AG04450 (cell line): ENCODE measurements at regions of chr11 and their contacts with region 1.

Region 1: GRCh38 chr11:124644426-124645280 is 22.0 kb downstream of the TBRG1 start:
- DNase-seq: no peak
- H3K4me3 ChIP-seq: no peak overlapping the region; the same call in 1 of the 2 replicates
- H3K27ac ChIP-seq: peak overlapping the region; percentile 40
- H3K27me3 ChIP-seq: no peaks in the 10 kb centered on the region
- CTCF ChIP-seq: peak; percentile 78

Region 2: DNA sequence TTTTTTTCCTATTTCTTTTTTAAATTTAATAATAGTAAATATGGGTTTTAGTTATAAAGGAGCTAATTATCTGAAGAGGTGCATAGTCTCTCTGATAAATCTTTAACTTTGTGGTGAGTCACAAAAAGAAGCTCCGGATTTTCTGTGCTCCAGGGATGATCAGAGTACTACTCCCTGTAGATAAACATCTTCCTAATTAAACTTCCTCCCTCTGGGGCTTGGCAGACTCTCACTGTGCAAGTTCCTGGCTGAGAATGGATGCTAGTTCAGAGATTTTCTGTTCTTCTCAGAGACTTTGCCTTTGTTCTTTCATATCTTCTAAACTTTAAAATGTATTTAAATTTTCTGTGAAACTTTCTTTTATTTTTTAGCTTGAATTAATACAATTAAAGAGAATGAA is 603.4 kb before region 1 on chr11 and contains the start of gene OR10G7:
- CTCF ChIA-PET with region 1: no interaction called
- POLR2A ChIA-PET with region 1: no interaction called
- DNase-seq: no peak
- H3K4me3 ChIP-seq: no peak within 1 kb of the TSS
- H3K27ac ChIP-seq: no peak within 1 kb of the TSS
- H3K27me3 ChIP-seq: no peaks in the 10 kb centered on the region
- CTCF ChIP-seq: no peak
- polyA plus RNA-seq, gene OR10G7: not detected in 2 replicates

Region 3: DNA sequence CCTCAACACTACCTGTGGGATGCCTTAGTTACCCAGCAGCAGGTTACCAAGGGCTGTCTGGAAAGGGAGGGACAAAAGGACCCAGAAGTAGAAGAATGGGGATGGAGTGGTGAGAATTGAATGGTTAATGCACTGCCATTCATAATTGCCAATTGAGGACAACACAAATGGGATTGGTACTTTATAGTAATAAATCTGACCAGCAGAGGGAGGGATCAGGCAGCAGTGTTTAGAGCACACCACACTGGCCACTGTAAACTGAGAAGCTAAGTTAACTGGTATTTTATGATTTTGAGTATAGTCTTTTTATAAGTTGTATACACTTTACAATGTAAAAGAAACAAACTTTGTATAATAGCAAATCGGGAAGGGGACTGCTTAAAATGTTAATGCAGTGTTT is 11.3 kb before region 1 on chr11:
- CTCF ChIA-PET with region 1: interaction called, 62 read pairs
- POLR2A ChIA-PET with region 1: interaction called, 3 read pairs
- DNase-seq: no peak
- H3K4me3 ChIP-seq: no peak overlapping the region
- H3K27ac ChIP-seq: no peak overlapping the region
- H3K27me3 ChIP-seq: no peaks in the 10 kb centered on the region
- CTCF ChIP-seq: peak; percentile 51

Region 4: DNA sequence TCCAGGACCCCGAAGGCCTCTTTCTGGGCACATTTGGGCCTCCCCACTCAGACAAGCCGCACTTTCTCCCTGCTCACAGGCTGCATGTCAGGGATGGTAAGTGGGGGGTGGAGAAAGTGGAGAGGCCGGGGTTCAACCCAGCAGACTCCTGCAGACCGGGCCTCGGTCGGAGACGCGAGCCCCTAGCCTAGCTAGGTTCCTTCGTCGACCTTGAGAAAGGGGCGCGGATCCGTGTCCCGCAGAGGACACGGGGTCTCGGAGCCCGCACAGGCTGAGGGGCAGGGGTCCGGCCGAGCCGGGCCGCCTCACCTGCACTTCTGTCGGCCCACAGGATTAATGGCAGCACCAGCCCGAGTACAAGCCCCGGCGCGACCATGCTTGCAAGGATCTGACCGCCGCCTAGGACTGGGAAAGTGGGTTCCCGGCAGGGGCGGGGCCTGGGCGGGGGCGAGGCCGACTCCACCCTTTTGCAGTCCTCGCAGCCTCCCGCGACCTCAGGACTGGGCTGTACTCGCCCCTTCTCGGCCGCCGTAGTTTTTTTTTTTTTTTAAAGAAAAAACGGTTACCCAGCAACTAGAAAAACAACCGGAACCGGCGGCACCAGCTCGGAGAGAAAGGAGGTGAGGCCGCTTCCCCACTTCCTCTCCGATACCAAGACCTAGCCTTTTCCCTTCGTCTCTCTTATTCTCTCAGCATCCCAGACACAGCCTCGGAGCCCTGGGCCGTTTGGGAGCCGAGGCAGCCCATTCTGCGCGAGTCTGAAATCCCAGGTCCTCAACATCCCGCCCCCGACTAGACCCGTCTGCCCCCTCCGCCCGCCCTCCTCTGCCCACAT is 28.9 kb after region 1 on chr11 and contains the starts of genes SIAE and SPA17:
- CTCF ChIA-PET with region 1: interaction called, 23 read pairs
- POLR2A ChIA-PET with region 1: no interaction called
- DNase-seq: peak; percentile 92
- H3K4me3 ChIP-seq: peak within 1 kb of the TSS; percentile 74
- H3K27ac ChIP-seq: peak within 1 kb of the TSS; percentile 69
- H3K27me3 ChIP-seq: no peaks in the 10 kb centered on the region
- CTCF ChIP-seq: no peak
- polyA plus RNA-seq, gene SIAE: 33.5 and 37.9 TPM in 2 replicates
- polyA plus RNA-seq, gene SPA17: 6.5 and 8.4 TPM in 2 replicates

Region 5: DNA sequence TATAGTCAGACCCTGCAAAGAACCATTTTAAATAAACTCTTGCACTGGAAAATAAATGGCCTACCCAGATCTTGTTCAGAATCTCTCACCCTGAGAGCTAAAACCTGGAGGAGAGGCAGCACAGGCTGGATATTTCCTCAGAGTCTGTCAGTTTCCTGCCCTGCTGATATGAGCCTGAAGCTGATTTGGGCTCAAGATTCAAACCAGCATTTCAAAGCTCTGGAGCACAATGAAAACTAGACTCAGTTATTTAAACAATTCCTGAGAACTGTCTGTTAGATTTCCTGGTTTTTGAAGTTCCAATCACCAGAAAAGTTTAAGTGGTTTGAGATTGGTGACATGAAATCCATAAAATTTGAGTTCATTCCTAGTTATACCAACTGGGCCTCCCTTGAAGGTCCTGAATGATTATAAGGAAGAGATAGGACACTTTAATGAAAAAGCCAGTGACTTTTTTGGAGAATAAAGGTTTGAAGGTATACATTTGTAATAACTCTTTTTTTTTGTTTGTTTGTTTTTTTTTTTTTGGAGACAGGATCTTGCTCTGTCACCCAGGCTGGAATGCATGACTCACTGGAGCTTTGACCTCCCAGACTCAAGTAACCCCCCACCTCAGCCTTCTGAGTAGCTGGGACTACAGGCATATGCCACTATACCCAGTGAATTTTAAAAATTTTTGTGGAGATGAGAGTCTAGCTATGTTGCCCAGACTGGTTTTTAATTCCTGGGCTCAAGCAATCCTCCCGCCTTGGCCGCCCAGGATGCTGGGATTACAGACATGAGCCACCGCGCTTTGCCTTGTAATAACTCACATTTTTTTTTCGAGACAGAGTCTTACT is 125.4 kb after region 1 on chr11:
- CTCF ChIA-PET with region 1: interaction called, 46 read pairs
- POLR2A ChIA-PET with region 1: no interaction called
- DNase-seq: no peak
- H3K4me3 ChIP-seq: no peak overlapping the region
- H3K27ac ChIP-seq: no peak overlapping the region
- H3K27me3 ChIP-seq: no peaks in the 10 kb centered on the region
- CTCF ChIP-seq: no peak

Region 6: GRCh38 chr11:124800226-124800929 is 155.7 kb after region 1 on chr11 and contains the start of gene MSANTD2:
- CTCF ChIA-PET with region 1: interaction called, 41 read pairs
- POLR2A ChIA-PET with region 1: interaction called, 4 read pairs
- DNase-seq: peak; percentile 48
- H3K4me3 ChIP-seq: peak within 1 kb of the TSS; percentile 83
- H3K27ac ChIP-seq: peak within 1 kb of the TSS; percentile 96
- H3K27me3 ChIP-seq: no peaks in the 10 kb centered on the region
- CTCF ChIP-seq: no peak
- polyA plus RNA-seq, gene MSANTD2: 7.6 and 9.8 TPM in 2 replicates

Region 7: GRCh38 chr11:124865921-124866583 is 221.4 kb after region 1 on chr11:
- CTCF ChIA-PET with region 1: interaction called, 31 read pairs
- POLR2A ChIA-PET with region 1: interaction called, 3 read pairs
- DNase-seq: no peak
- H3K4me3 ChIP-seq: peak overlapping the region; percentile 31
- H3K27ac ChIP-seq: no peak overlapping the region
- H3K27me3 ChIP-seq: peaks cover 97% of the 10 kb centered on the region
- CTCF ChIP-seq: peak; percentile 73